Panc1 (cell line): ENCODE measurements at regions of chr9 and their contacts with region 1.

Region 1: GRCh38 chr9:5529683-5530221 is 19.4 kb downstream of the PDCD1LG2 start:
- DNase-seq: no peak
- ATAC-seq: no peak
- H3K4me3 ChIP-seq: no peak overlapping the region
- H3K27ac ChIP-seq: no peak overlapping the region
- H3K4me1 ChIP-seq: no peaks in the 10 kb centered on the region
- H3K27me3 ChIP-seq: no peaks in the 10 kb centered on the region
- CTCF ChIP-seq: no peak

Region 2: GRCh38 chr9:5479994-5480694 is 49.6 kb before region 1 on chr9:
- CTCF ChIA-PET with region 1: no interaction called
- POLR2A ChIA-PET with region 1: no interaction called
- in situ Hi-C with region 1: no loop called
- intact Hi-C with region 1: loop called (anchors 5 kb)
- DNase-seq: no peak
- ATAC-seq: no peak
- H3K4me3 ChIP-seq: no peak overlapping the region
- H3K27ac ChIP-seq: no peak overlapping the region
- H3K4me1 ChIP-seq: no peaks in the 10 kb centered on the region
- H3K27me3 ChIP-seq: no peaks in the 10 kb centered on the region
- CTCF ChIP-seq: no peak

Region 3: GRCh38 chr9:5628530-5629311 is 99.0 kb after region 1 on chr9 and contains the start of gene RIC1:
- CTCF ChIA-PET with region 1: no interaction called
- POLR2A ChIA-PET with region 1: no interaction called
- in situ Hi-C with region 1: no loop called
- intact Hi-C with region 1: no loop called
- DNase-seq: no peak
- ATAC-seq: peak; percentile 92
- H3K4me3 ChIP-seq: peak within 1 kb of the TSS; percentile 63 to 78
- H3K27ac ChIP-seq: peak within 1 kb of the TSS; percentile 76
- H3K4me1 ChIP-seq: peaks cover 3% of the 10 kb centered on the region; the same call in 1 of the 2 replicates
- H3K27me3 ChIP-seq: no peaks in the 10 kb centered on the region
- CTCF ChIP-seq: no peak
- total RNA-seq, gene RIC1: 7.0 TPM